HCT116 (cell line): ENCODE measurements at regions of chr5 and their contacts with region 1.

Region 1: GRCh38 chr5:61055434-61056006 is 106.7 kb downstream of the SMIM15 start:
- DNase-seq: no peak
- ATAC-seq: no peak
- H3K4me3 ChIP-seq: no peak overlapping the region
- H3K27ac ChIP-seq: no peak overlapping the region
- H3K4me1 ChIP-seq: peaks cover 32 to 41% of the 10 kb centered on the region in 2 experiments
- H3K27me3 ChIP-seq: no peaks in the 10 kb centered on the region
- CTCF ChIP-seq: peak; percentile 61 to 81 (median 66); a peak in 5 of 6 replicates
- POLR2A ChIP-seq: no peak
- RAD21 ChIP-seq: peak; percentile 85

Region 2: DNA sequence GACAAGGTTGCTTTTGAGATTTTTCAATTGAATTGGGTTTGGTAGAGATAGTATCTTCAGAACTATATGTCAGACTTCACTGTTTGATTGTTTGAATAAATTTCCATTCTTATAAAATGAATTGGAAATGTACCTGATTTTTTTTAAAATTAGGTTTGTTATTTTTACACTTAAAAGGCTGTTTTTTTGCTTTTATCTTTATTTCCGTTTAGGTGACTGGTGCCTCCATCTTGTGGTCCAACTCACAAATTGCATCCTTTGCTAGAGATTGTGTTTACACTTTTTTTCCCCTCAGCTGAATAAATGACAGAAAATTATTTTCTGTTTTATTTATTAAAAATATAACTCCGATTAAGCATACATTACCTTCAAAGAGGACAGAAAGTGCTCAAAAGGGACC is 94.9 kb before region 1 on chr5:
- CTCF ChIA-PET with region 1: interaction called, 13 read pairs
- POLR2A ChIA-PET with region 1: no interaction called
- RAD21 ChIA-PET with region 1: no interaction called
- intact Hi-C with region 1: loop called (anchors 5 kb)
- DNase-seq: peak; percentile 6
- ATAC-seq: no peak
- H3K4me3 ChIP-seq: no peak overlapping the region
- H3K27ac ChIP-seq: no peak overlapping the region
- H3K4me1 ChIP-seq: no peaks in the 10 kb centered on the region; a peak in 1 of 4 replicates
- H3K27me3 ChIP-seq: no peaks in the 10 kb centered on the region
- CTCF ChIP-seq: peak; percentile 15 to 60 (median 53); a peak in 5 of 6 replicates
- POLR2A ChIP-seq: no peak
- RAD21 ChIP-seq: peak; percentile 38

Region 3: DNA sequence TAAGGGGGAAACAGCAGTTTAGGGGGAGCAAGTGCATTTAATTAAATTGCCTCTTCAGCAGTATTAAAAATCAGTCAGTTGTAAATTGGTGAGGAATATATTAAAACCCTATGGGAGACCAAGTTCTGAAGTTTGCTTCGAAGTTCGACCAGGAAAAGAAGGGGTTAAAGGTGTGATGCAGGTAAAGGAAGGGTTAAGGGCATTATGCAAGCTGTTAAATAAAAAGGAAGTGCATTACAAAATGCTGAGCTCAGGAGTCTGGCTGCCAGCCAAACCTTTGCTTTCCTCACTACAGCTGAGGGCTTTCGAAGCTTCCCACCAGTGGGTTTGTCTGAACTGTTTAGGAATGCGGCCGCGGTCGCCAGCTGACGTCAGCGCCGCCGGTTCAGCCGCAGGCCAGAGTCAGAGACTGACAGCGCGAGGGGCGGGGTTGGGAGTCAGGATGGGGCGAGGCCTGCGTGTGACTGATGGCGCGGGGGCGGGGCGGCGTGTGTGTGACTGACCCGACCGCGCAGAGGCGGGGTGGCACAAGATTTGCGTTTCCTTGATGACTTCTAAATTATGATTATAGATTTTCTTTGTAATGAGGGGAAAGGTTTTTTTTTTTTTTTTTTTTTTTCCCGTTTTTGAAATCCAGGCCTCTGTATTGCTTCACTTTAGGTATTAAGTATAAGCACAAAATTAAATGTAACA is 353.1 kb after region 1 on chr5:
- CTCF ChIA-PET with region 1: no interaction called
- POLR2A ChIA-PET with region 1: no interaction called
- RAD21 ChIA-PET with region 1: no interaction called
- intact Hi-C with region 1: loop called (anchors 10 kb)
- DNase-seq: peak; percentile 99
- ATAC-seq: peak; percentile 98
- H3K4me3 ChIP-seq: peak overlapping the region; percentile 14 to 41
- H3K27ac ChIP-seq: peak overlapping the region; percentile 55; the same call in 1 of the 2 replicates
- H3K4me1 ChIP-seq: peaks cover 31 to 36% of the 10 kb centered on the region in 2 experiments
- H3K27me3 ChIP-seq: no peaks in the 10 kb centered on the region
- CTCF ChIP-seq: no peak
- POLR2A ChIP-seq: no peak
- RAD21 ChIP-seq: peak; percentile 37

Region 4: GRCh38 chr5:61817472-61818326 is 762.2 kb after region 1 on chr5:
- CTCF ChIA-PET with region 1: interaction called, 3 read pairs
- POLR2A ChIA-PET with region 1: no interaction called
- RAD21 ChIA-PET with region 1: no interaction called
- intact Hi-C with region 1: loop called (anchors 10 kb)
- DNase-seq: peak; percentile 22
- ATAC-seq: peak; percentile 96
- H3K4me3 ChIP-seq: no peak overlapping the region
- H3K27ac ChIP-seq: no peak overlapping the region
- H3K4me1 ChIP-seq: no peaks in the 10 kb centered on the region
- H3K27me3 ChIP-seq: peaks cover 47% of the 10 kb centered on the region
- CTCF ChIP-seq: peak; percentile 47 to 69 (median 64); a peak in 5 of 6 replicates
- POLR2A ChIP-seq: no peak
- RAD21 ChIP-seq: peak; percentile 60